Calu3 (cell line): ENCODE measurements at regions of chr2 and their contacts with region 1.

Region 1: GRCh38 chr2:100818606-100819369 is 1.2 kb upstream of the NPAS2 start:
- DNase-seq: peak; percentile 68
- H3K4me3 Mint-ChIP-seq: peak overlapping the region; percentile 73
- H3K27ac Mint-ChIP-seq: peak overlapping the region; percentile 77
- H3K4me1 Mint-ChIP-seq: peaks cover 47% of the 10 kb centered on the region
- H3K27me3 Mint-ChIP-seq: no peaks in the 10 kb centered on the region
- CTCF ChIP-seq: peak; percentile 23

Region 2: GRCh38 chr2:100670232-100670631 is 148.6 kb before region 1 on chr2:
- CTCF ChIA-PET with region 1: no interaction called
- intact Hi-C with region 1: loop called (anchors 2 kb)
- DNase-seq: peak; percentile 54
- H3K4me3 Mint-ChIP-seq: no peak overlapping the region
- H3K27ac Mint-ChIP-seq: no peak overlapping the region
- H3K4me1 Mint-ChIP-seq: peaks cover 11% of the 10 kb centered on the region
- H3K27me3 Mint-ChIP-seq: peaks cover 14% of the 10 kb centered on the region
- CTCF ChIP-seq: peak; percentile 62

Region 3: GRCh38 chr2:100730346-100730745 is 88.4 kb before region 1 on chr2:
- CTCF ChIA-PET with region 1: interaction called, 4 read pairs
- intact Hi-C with region 1: loop called (anchors 2 kb)
- DNase-seq: peak; percentile 76
- H3K4me3 Mint-ChIP-seq: no peak overlapping the region
- H3K27ac Mint-ChIP-seq: no peak overlapping the region
- H3K4me1 Mint-ChIP-seq: peaks cover 34% of the 10 kb centered on the region
- H3K27me3 Mint-ChIP-seq: no peaks in the 10 kb centered on the region
- CTCF ChIP-seq: peak; percentile 68

Region 4: GRCh38 chr2:100780203-100781008 is 38.4 kb before region 1 on chr2:
- CTCF ChIA-PET with region 1: interaction called, 7 read pairs
- intact Hi-C with region 1: loop called (anchors 2 kb)
- DNase-seq: peak; percentile 75
- H3K4me3 Mint-ChIP-seq: peak overlapping the region; percentile 42
- H3K27ac Mint-ChIP-seq: peak overlapping the region; percentile 91
- H3K4me1 Mint-ChIP-seq: peaks cover 54% of the 10 kb centered on the region
- H3K27me3 Mint-ChIP-seq: no peaks in the 10 kb centered on the region
- CTCF ChIP-seq: no peak

Region 5: GRCh38 chr2:100902833-100903405 is 84.1 kb after region 1 on chr2:
- CTCF ChIA-PET with region 1: interaction called, 3 read pairs
- intact Hi-C with region 1: loop called (anchors 5 kb)
- DNase-seq: peak; percentile 56
- H3K4me3 Mint-ChIP-seq: no peak overlapping the region
- H3K27ac Mint-ChIP-seq: peak overlapping the region; percentile 63
- H3K4me1 Mint-ChIP-seq: peaks cover 42% of the 10 kb centered on the region
- H3K27me3 Mint-ChIP-seq: no peaks in the 10 kb centered on the region
- CTCF ChIP-seq: no peak

Region 6: DNA sequence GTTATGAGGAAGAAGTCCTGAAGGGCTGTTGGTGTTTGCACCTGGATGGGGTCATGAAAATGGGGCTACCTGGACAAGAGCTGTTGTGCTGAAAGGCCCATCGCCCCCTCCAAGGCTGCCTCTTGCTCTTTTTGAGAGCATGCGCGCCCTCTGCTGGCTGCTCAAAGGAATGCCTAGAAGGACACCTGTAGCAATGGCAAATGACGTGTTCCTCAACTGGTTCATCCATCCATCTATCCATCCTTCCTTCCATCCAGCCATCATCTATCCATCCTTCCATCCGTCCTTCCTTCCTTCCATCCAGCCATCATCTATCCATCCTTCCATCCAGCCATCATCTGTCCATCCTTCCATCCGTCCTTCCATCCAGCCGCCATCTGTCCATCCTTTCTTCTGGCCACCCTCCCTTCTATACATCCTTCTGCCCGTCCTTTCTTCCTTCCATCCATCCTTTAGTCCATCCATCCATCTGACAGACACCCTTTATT is 166.1 kb after region 1 on chr2:
- CTCF ChIA-PET with region 1: no interaction called
- intact Hi-C with region 1: loop called (anchors 10 kb)
- DNase-seq: peak; percentile 77
- H3K4me3 Mint-ChIP-seq: peak overlapping the region; percentile 6
- H3K27ac Mint-ChIP-seq: no peak overlapping the region
- H3K4me1 Mint-ChIP-seq: peaks cover 8% of the 10 kb centered on the region
- H3K27me3 Mint-ChIP-seq: no peaks in the 10 kb centered on the region
- CTCF ChIP-seq: peak; percentile 91